ENCODE measurements at regions of chr5 and their contacts with region 1.

Region 1: GRCh38 chr5:178859625-178860531 is at the start of gene ZNF354B:
- DNase-seq: peak; percentile 92
- H3K4me3 ChIP-seq: peak within 1 kb of the TSS; percentile 78 to 97 (median 90)
- H3K27ac ChIP-seq: peak within 1 kb of the TSS; percentile 83 to 94 (median 89)
- H3K4me1 ChIP-seq: peaks cover 4 to 13% (median 6%) of the 10 kb centered on the region in 4 donors
- H3K27me3 ChIP-seq: no peaks in the 10 kb centered on the region
- CTCF ChIP-seq: peak in 1 of 5 experiments; percentile 15
- EP300 ChIP-seq: no peak
- POLR2A ChIP-seq: peak; percentile 61
- total RNA-seq, gene ZNF354B: 2.4 to 42.3 (median 14.8) TPM

Region 2: DNA sequence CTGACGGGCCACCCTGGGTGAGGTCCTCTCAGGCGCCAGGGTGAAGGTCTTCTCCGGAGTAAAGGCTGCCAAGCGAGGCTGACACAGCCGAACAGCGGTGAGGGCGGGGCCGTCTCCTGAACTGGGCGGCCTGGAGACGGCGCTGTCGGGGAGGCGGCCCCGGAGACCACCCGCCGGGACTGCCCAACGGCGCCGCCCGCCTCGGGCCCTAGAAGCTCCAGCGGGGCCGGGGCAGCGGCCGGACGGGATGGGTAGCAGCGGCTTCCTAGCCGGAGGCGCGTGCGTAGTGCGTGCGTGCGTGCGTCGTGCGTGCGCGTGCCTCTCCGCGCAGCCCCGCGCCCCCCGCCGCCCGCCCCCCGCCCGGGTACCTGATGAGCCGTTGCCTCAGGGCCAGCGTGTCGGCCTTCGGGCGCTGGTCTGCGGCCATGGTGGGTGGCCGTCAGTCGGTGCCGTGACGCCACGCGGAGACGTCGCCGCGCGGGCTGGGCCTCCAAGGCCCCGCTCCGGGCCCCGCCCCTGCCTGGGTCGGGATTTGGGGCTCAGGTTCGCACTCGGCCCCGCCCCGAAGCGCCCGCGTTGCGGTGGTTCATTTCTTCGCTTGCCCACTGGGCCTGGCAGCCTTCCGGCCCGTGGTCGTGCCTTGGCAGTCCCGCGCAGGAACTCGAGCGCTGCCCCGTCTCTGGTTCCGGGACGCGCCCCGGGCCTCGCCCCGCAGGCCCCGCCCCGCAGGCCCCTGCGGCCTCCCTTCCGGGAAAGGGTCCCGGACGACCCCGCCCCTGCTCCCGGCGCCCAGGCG is 627.6 kb before region 1 on chr5 and contains the start of gene PHYKPL:
- in situ Hi-C with region 1: no loop called
- intact Hi-C with region 1: no loop called
- DNase-seq: peak; percentile 80
- H3K4me3 ChIP-seq: peak within 1 kb of the TSS; percentile 73 to 83 (median 78)
- H3K27ac ChIP-seq: peak within 1 kb of the TSS; percentile 94 to 99 (median 98)
- H3K4me1 ChIP-seq: peaks cover 25 to 72% (median 36%) of the 10 kb centered on the region in 4 donors
- H3K27me3 ChIP-seq: no peaks in the 10 kb centered on the region
- CTCF ChIP-seq: no peak
- EP300 ChIP-seq: peak; percentile 34
- POLR2A ChIP-seq: peak; percentile 78
- total RNA-seq, gene PHYKPL: 124 to 405 (median 197) TPM

Region 3: DNA sequence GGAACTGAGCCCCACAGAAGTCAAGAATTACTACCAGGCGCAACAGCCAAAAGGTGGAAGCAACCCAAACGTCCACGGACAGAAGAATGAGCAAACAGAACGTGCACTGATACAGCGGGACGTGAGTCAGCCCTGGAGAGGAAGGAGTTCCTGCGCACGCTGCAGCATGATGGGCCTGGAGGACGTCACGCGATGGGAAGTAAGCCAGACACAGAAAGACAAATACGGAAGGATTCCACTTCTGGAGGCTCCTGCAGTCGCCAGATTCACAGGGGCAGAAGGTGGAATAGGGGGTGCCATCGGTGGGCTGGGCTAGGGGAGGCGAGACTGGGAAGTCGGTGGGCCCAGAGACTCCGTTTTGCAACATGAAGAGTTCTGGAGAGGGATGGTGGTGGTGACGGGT is 547.0 kb before region 1 on chr5:
- in situ Hi-C with region 1: no loop called
- intact Hi-C with region 1: no loop called
- DNase-seq: peak; percentile 33
- H3K4me3 ChIP-seq: no peak overlapping the region
- H3K27ac ChIP-seq: peak overlapping the region in 1 of 4 donors; percentile 33
- H3K4me1 ChIP-seq: no peaks in the 10 kb centered on the region
- H3K27me3 ChIP-seq: no peaks in the 10 kb centered on the region
- CTCF ChIP-seq: no peak
- EP300 ChIP-seq: no peak
- POLR2A ChIP-seq: no peak

Region 4: DNA sequence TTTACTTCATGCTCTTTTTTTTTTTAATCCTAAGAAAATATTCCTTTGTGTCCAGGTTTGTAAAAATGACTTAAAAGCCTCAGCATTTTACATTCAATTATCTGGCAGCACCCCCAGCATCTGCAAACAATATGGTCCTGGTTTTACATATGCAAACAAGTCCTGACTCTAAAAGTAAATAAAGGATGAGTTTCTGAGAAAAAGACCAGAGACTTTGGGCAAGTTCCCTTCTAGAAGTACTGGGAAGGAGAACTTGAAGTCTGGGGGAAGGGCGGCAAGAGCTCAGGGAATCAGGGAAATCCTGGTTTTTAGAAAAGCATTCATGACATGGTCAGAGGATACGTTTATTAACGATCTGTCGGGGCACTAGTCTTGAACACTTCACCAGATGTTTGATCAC is 295.5 kb before region 1 on chr5:
- in situ Hi-C with region 1: no loop called
- intact Hi-C with region 1: no loop called
- DNase-seq: no peak
- H3K4me3 ChIP-seq: no peak overlapping the region
- H3K27ac ChIP-seq: no peak overlapping the region
- H3K4me1 ChIP-seq: no peaks in the 10 kb centered on the region
- H3K27me3 ChIP-seq: no peaks in the 10 kb centered on the region
- CTCF ChIP-seq: no peak
- EP300 ChIP-seq: no peak
- POLR2A ChIP-seq: no peak

Region 5: GRCh38 chr5:178642351-178642971 is 217.4 kb before region 1 on chr5:
- in situ Hi-C with region 1: no loop called
- intact Hi-C with region 1: no loop called
- DNase-seq: no peak
- H3K4me3 ChIP-seq: no peak overlapping the region
- H3K27ac ChIP-seq: no peak overlapping the region
- H3K4me1 ChIP-seq: no peaks in the 10 kb centered on the region
- H3K27me3 ChIP-seq: no peaks in the 10 kb centered on the region
- CTCF ChIP-seq: no peak
- EP300 ChIP-seq: no peak
- POLR2A ChIP-seq: no peak

Region 6: DNA sequence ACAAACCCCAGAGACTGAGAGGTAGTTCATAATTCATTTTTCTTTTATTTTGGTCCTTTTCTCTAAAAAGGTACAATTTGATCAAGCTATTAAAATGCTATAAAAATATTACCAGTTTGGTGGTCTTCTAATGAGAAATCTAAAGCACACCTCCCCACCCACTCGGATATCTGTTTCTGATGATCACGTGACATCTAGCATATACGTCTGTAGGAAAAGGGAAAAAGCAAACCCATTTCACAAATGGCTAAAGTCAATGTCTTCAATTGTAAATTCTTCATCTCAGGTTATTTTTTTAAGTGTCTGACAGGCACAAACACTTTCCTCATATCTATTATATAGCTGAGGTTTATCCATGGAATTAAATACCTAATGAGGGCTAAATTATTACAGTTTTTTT is 148.3 kb before region 1 on chr5:
- in situ Hi-C with region 1: loop called in 1 of 4 experiments (anchors 10 kb)
- intact Hi-C with region 1: no loop called
- DNase-seq: no peak
- H3K4me3 ChIP-seq: no peak overlapping the region
- H3K27ac ChIP-seq: no peak overlapping the region
- H3K4me1 ChIP-seq: no peaks in the 10 kb centered on the region
- H3K27me3 ChIP-seq: no peaks in the 10 kb centered on the region
- CTCF ChIP-seq: no peak
- EP300 ChIP-seq: no peak
- POLR2A ChIP-seq: no peak

Region 7: GRCh38 chr5:178732281-178732680 is 127.6 kb before region 1 on chr5:
- in situ Hi-C with region 1: loop called in 2 of 4 experiments (anchors 10 to 25 kb)
- intact Hi-C with region 1: loop called (anchors 10 kb)
- DNase-seq: no peak
- H3K4me3 ChIP-seq: no peak overlapping the region
- H3K27ac ChIP-seq: no peak overlapping the region
- H3K4me1 ChIP-seq: peaks cover 0 to 8% (median 6%) of the 10 kb centered on the region in 4 donors
- H3K27me3 ChIP-seq: no peaks in the 10 kb centered on the region
- CTCF ChIP-seq: no peak
- EP300 ChIP-seq: no peak
- POLR2A ChIP-seq: no peak

Measured in transverse colon (tissue), 4 donors.